ENCODE measurements at regions of chr13 and their contacts with region 1.

Region 1: GRCh38 chr13:50123862-50124536 is 108.8 kb downstream of the KCNRG start:
- DNase-seq: peak; percentile 95 to 99 (median 97)
- H3K4me3 ChIP-seq: peak overlapping the region; percentile 65 to 95 (median 79)
- H3K27ac ChIP-seq: peak overlapping the region; percentile 93 to 96
- H3K4me1 ChIP-seq: peaks cover 22 to 60% (median 47%) of the 10 kb centered on the region in 4 experiments
- H3K27me3 ChIP-seq: peaks cover 0 to 8% (median 4%) of the 10 kb centered on the region in 5 experiments

Region 2: DNA sequence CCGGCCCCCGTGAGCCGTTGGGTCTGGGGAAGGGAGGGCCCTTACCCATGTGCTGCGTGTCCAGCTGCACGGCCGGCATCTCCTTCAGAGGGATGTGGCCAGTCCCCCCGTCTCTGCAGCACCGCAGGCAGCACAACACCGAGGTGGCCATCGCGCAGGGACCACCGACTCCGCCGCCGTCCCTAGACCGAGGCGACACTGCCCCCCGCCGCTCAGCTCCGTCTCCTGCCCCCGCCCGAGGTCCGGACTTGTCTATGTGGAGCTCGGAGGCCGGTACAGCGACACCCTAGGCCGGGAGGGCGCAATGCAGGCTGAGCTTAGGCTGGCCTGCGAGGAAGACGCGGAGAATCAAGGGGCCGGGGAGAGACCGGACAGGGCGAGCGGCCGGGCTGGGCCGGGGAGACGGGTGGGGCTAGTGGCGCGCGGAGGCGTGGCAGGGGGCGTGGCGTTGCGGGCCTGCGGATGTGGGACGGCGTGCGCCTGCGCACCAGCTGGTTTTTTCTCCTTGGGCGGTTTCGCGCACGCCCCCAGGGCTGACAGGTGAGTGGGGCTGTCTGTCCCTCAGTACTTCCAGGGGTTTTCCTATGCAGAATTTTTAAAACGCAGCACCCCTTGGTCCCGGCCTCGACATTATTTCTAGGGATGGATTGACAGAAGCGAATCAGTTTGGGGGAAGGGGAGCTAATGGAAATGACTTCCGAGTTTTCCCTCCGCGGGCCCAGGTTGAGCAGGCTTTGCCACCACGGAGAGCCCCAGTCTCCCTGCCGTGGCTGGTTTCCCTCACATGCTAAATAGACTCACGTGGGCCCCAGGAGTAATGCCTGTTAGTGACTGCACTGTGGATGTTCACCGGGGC is 187.7 kb before region 1 on chr13 and contains the start of gene SPRYD7:
- CTCF ChIA-PET with region 1: no interaction called
- POLR2A ChIA-PET with region 1: no interaction called
- DNase-seq: peak; percentile 98 to 99 (median 99)
- H3K4me3 ChIP-seq: peak within 1 kb of the TSS; percentile 77 to 98 (median 92)
- H3K27ac ChIP-seq: peak within 1 kb of the TSS; percentile 54 to 79
- H3K4me1 ChIP-seq: peaks cover 3 to 18% (median 16%) of the 10 kb centered on the region in 4 experiments
- H3K27me3 ChIP-seq: no peaks in the 10 kb centered on the region

Region 3: DNA sequence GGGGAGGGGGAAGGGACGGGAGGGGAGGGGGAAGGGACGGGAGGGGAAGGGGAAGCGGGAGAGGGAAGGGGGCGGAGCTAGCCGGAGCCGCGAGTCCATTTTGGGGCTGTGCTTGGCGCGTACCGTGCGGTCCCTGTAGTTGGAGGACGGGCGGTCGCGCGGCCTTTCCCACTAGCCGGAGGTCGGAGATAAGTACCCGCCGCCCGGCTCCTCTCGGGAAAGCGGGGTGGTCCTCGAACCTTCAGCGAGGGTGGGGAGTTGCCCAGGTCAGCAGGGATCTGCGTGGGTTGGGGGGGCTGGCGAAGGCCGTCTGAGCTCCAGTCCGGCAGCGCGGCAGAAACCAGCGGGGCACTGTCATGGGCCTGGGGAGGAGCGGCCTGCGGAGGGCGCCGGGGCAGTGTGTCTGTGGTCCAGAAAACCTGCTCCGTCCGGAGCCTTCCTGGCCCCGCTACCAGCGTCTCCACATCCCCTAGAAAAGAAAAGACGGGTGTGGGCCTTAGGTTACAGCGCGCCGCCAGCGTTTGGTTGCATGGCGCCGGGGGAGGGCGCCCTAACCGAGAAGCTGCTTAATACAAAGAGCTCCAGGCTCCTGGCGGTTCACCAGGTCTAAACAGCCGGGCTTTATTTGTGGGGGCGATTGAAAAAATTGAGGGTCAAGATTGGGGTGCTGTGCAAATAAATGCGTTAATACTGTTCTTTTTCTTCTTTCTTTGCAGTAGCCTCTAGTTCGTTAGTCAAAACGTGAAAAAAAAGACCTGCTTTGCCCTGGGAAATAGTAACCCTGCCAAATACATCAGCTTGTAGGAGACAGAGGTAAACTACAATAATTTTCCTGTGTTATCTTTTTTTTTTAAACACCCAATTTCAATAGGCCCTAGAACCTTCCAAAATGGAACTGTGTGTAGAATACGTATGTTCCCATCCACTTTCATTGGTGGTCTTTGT is 126.8 kb before region 1 on chr13 and contains the start of gene TRIM13:
- CTCF ChIA-PET with region 1: interaction called, 7 read pairs
- POLR2A ChIA-PET with region 1: interaction called, 29 read pairs
- DNase-seq: peak; percentile 91 to 95 (median 94)
- H3K4me3 ChIP-seq: peak within 1 kb of the TSS; percentile 77 to 97 (median 94)
- H3K27ac ChIP-seq: peak within 1 kb of the TSS; percentile 96 to 97
- H3K4me1 ChIP-seq: peaks cover 13 to 47% (median 37%) of the 10 kb centered on the region in 4 experiments
- H3K27me3 ChIP-seq: no peaks in the 10 kb centered on the region

Region 4: GRCh38 chr13:50071379-50071778 is 52.6 kb before region 1 on chr13:
- CTCF ChIA-PET with region 1: interaction called, 10 read pairs
- POLR2A ChIA-PET with region 1: interaction called, 6 read pairs
- DNase-seq: peak in 1 of 3 donors; percentile 26
- H3K4me3 ChIP-seq: peak overlapping the region in 3 of 7 experiments; percentile 26 to 58 (median 33)
- H3K27ac ChIP-seq: peak overlapping the region in 1 of 2 experiments; percentile 70
- H3K4me1 ChIP-seq: peaks cover 2 to 48% (median 20%) of the 10 kb centered on the region in 4 experiments
- H3K27me3 ChIP-seq: no peaks in the 10 kb centered on the region

Region 5: GRCh38 chr13:50081679-50082425 is 42.1 kb before region 1 on chr13:
- CTCF ChIA-PET with region 1: interaction called, 112 read pairs
- POLR2A ChIA-PET with region 1: interaction called, 80 read pairs
- DNase-seq: peak; percentile 99
- H3K4me3 ChIP-seq: peak overlapping the region; percentile 74 to 99 (median 96)
- H3K27ac ChIP-seq: peak overlapping the region; percentile 85 to 92
- H3K4me1 ChIP-seq: peaks cover 15 to 49% (median 31%) of the 10 kb centered on the region in 4 experiments
- H3K27me3 ChIP-seq: no peaks in the 10 kb centered on the region

Region 6: GRCh38 chr13:50106559-50106958 is 17.4 kb before region 1 on chr13:
- CTCF ChIA-PET with region 1: interaction called, 8 read pairs
- POLR2A ChIA-PET with region 1: interaction called, 10 read pairs
- DNase-seq: peak in 2 of 3 donors; percentile 38 to 56
- H3K4me3 ChIP-seq: peak overlapping the region in 1 of 7 experiments; percentile 45
- H3K27ac ChIP-seq: peak overlapping the region; percentile 57 to 75
- H3K4me1 ChIP-seq: peaks cover 9 to 44% (median 26%) of the 10 kb centered on the region in 4 experiments
- H3K27me3 ChIP-seq: no peaks in the 10 kb centered on the region